ENCODE measurements at regions of chr11 and their contacts with region 1.

Region 1: GRCh38 chr11:102341844-102342318 is 5.1 kb upstream of the BIRC2 start:
- DNase-seq: peak; percentile 60
- H3K4me3 ChIP-seq: no peak overlapping the region
- H3K27ac ChIP-seq: no peak overlapping the region
- H3K4me1 ChIP-seq: peaks cover 0 to 6% of the 10 kb centered on the region in 2 experiments; a peak in 3 of 4 replicates
- H3K27me3 ChIP-seq: no peaks in the 10 kb centered on the region
- CTCF ChIP-seq: peak; percentile 88
- EP300 ChIP-seq: no peak
- RAD21 ChIP-seq: peak; percentile 80

Region 2: DNA sequence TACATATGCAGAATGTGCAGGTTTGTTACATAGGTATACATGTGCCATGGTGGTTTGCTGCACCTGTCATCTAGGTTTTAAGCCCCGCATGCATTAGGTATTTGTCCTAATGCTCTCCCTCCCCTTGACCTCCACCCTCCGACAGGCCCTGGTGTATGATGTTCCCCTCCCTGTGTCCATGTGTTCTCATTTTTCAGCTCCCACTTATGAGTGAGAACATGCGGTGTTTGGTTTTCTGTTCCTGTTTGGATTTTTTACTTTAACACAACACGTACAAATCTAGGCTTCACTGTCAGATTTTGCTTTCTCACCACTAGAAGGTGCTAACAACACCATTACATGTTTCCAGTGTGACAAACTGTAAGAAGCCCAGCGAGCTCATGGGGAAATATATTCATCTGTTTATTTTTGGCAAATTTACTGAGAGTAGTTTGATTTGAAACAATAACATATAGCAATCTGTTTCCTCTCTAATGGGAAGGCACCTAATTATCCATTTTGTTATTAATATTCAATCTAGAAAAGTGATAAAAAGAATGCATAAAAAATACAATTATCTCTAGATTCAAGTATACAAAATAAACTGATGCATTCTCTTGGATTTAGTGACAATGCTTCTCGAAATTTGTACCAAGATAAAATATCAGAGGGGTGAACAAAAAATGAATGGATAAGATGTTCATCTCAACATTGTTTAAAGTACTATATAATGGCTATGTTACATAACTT is 47.8 kb before region 1 on chr11:
- CTCF ChIA-PET with region 1: interaction called, 40 read pairs
- POLR2A ChIA-PET with region 1: interaction called, 3 read pairs
- DNase-seq: no peak
- H3K4me3 ChIP-seq: peak overlapping the region in 1 of 2 experiments; percentile 13; a peak in 1 of 4 replicates
- H3K27ac ChIP-seq: no peak overlapping the region
- H3K4me1 ChIP-seq: peaks cover 10% of the 10 kb centered on the region in 2 experiments
- H3K27me3 ChIP-seq: no peaks in the 10 kb centered on the region
- CTCF ChIP-seq: peak; percentile 70
- EP300 ChIP-seq: no peak
- RAD21 ChIP-seq: peak; percentile 51

Region 3: DNA sequence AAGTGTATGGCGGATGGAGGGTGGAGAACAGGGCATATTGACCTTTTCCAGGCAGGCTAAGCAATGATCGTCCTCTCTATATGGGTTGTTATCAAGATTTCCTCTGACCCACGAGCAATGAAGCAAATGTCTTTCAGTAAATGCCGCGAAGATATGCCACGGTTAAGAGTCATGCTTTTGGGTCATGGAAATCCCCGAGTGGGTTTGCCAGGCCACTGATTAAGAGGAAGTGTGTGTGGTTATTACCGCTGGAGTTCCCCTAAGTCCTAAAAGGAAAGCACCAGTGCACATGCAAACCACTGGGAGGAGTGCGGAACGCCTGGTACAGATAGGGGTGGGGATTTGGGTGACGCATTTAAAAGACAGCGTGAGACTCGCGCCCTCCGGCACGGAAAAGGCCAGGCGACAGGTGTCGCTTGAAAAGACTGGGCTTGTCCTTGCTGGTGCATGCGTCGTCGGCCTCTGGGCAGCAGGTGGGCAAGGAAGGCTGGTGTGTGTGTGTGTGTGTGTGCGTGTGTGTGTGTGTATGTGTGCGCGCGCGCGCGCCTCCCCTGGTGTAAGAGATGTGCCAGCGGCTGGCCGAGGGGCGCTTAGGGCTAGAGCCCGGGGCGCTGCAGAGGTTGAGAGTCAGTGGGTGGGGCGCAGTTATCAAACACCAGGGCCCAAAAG is 24.6 kb before region 1 on chr11 and contains the start of gene BIRC3:
- CTCF ChIA-PET with region 1: interaction called, 13 read pairs
- POLR2A ChIA-PET with region 1: no interaction called
- DNase-seq: peak; percentile 62
- H3K4me3 ChIP-seq: peak within 1 kb of the TSS; percentile 52 to 66
- H3K27ac ChIP-seq: peak within 1 kb of the TSS in 1 of 2 experiments; percentile 41; a peak in 1 of 4 replicates
- H3K4me1 ChIP-seq: peaks cover 8 to 16% of the 10 kb centered on the region in 2 experiments; a peak in 2 of 4 replicates
- H3K27me3 ChIP-seq: no peaks in the 10 kb centered on the region
- CTCF ChIP-seq: peak; percentile 39
- EP300 ChIP-seq: peak in 1 of 2 experiments; percentile 27; a peak in 1 of 4 replicates
- RAD21 ChIP-seq: no peak
- polyA plus RNA-seq, gene BIRC3: 0.46 and 0.62 TPM in 2 replicates

Region 4: DNA sequence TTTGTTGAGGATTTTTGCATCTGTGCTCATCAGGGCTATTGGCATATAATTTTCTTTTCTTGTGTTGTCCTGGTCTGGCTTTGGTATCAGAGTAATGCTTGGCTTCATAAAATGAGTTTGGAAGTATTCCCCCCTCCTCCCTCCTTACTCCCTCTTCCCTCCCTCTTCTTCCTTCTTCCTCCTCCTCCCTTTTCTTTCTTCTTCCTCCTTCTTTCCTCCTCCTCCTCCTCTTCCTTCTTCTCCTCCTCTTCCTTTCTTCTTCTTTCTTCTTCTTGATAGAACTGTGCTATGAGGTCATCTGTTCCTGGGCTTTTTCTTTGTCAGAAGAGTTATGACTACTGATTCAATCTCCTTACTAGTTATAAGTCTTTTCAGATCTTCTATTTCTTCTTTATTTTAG is 15.2 kb after region 1 on chr11:
- CTCF ChIA-PET with region 1: interaction called, 12 read pairs
- POLR2A ChIA-PET with region 1: no interaction called
- DNase-seq: no peak
- H3K4me3 ChIP-seq: no peak overlapping the region
- H3K27ac ChIP-seq: no peak overlapping the region
- H3K4me1 ChIP-seq: peaks cover 0 to 5% of the 10 kb centered on the region in 2 experiments; a peak in 2 of 4 replicates
- H3K27me3 ChIP-seq: no peaks in the 10 kb centered on the region
- CTCF ChIP-seq: no peak
- EP300 ChIP-seq: no peak
- RAD21 ChIP-seq: no peak

Region 5: GRCh38 chr11:102495161-102496042 is 153.5 kb after region 1 on chr11:
- CTCF ChIA-PET with region 1: interaction called, 29 read pairs
- POLR2A ChIA-PET with region 1: no interaction called
- DNase-seq: peak; percentile 54
- H3K4me3 ChIP-seq: no peak overlapping the region
- H3K27ac ChIP-seq: no peak overlapping the region
- H3K4me1 ChIP-seq: peaks cover 0 to 2% of the 10 kb centered on the region in 2 experiments; a peak in 1 of 4 replicates
- H3K27me3 ChIP-seq: no peaks in the 10 kb centered on the region
- CTCF ChIP-seq: peak; percentile 78
- EP300 ChIP-seq: no peak
- RAD21 ChIP-seq: peak; percentile 90

Region 6: DNA sequence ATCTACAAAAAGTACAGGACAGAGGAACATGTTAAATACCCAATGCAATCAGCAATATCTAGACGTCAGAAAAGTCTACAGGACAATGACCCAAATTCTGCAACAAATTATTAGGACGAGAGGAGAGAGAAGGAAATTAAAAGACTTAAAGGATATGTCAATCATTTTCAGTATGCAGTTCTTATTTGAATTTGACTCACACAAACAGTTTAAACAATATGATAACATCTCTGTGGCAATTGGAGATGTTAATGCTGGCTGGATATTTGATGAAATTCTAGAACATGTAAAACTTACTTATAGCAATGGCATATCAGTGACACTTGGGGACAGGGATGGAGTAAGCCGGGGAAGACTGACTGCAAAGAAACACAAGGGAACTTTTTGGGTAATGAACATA is 751.5 kb after region 1 on chr11:
- CTCF ChIA-PET with region 1: no interaction called
- POLR2A ChIA-PET with region 1: no interaction called
- DNase-seq: no peak
- H3K4me3 ChIP-seq: no peak overlapping the region
- H3K27ac ChIP-seq: no peak overlapping the region
- H3K4me1 ChIP-seq: peaks cover 0 to 12% of the 10 kb centered on the region in 2 experiments; a peak in 3 of 4 replicates
- H3K27me3 ChIP-seq: no peaks in the 10 kb centered on the region; the same call in 1 of the 2 replicates
- CTCF ChIP-seq: no peak
- EP300 ChIP-seq: no peak
- RAD21 ChIP-seq: no peak

Measured in SK-N-SH (cell line).